ENCODE measurements at regions of chr9 and their contacts with region 1.

Region 1: DNA sequence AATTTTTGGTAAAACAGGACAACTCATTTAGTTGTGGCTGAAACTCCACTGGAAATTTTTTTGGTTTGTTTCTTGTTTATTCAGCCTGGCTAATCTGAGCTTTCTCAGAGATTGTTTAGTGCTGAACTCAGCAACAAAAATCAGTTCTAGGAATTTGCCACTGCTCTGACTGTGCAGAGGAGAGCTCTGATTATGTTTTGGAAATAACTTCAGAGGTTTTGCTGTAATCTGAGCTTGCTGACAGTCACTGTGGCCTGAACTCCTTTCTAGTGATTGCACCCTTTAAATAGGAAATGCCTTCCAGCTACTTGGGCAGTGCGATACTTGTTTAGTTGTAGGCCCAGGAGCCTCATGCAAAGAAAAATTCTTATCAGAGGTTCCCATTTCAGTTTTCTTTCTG is 60.2 kb downstream of the OSTF1 start:
- DNase-seq: no peak
- H3K4me3 Mint-ChIP-seq: peak overlapping the region; percentile 30
- H3K27ac Mint-ChIP-seq: peak overlapping the region; percentile 87
- H3K4me1 Mint-ChIP-seq: peaks cover 75% of the 10 kb centered on the region
- H3K27me3 Mint-ChIP-seq: no peaks in the 10 kb centered on the region

Region 2: DNA sequence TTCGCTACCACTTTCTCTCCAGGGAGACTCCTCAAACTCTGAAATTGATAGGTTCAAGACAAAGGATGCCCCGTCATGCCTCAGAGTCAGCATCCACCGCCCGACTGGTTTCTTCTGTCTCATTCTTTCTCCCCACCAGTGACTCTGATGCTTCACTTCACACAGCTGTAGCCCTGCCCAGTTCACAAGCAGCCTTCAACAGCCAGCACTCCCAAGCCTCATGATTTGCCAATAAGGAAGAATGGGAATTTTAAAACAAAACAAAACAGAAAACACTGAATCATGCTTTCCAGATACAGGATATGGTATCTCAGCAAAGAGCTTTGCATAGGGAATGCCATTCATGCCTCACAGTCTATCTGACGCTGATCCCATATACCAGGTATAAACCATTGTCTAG is 1022.6 kb before region 1 on chr9:
- intact Hi-C with region 1: loop called (anchors 5 kb)
- DNase-seq: no peak
- H3K4me3 Mint-ChIP-seq: no peak overlapping the region
- H3K27ac Mint-ChIP-seq: no peak overlapping the region
- H3K4me1 Mint-ChIP-seq: peaks cover 15% of the 10 kb centered on the region
- H3K27me3 Mint-ChIP-seq: no peaks in the 10 kb centered on the region

Region 3: DNA sequence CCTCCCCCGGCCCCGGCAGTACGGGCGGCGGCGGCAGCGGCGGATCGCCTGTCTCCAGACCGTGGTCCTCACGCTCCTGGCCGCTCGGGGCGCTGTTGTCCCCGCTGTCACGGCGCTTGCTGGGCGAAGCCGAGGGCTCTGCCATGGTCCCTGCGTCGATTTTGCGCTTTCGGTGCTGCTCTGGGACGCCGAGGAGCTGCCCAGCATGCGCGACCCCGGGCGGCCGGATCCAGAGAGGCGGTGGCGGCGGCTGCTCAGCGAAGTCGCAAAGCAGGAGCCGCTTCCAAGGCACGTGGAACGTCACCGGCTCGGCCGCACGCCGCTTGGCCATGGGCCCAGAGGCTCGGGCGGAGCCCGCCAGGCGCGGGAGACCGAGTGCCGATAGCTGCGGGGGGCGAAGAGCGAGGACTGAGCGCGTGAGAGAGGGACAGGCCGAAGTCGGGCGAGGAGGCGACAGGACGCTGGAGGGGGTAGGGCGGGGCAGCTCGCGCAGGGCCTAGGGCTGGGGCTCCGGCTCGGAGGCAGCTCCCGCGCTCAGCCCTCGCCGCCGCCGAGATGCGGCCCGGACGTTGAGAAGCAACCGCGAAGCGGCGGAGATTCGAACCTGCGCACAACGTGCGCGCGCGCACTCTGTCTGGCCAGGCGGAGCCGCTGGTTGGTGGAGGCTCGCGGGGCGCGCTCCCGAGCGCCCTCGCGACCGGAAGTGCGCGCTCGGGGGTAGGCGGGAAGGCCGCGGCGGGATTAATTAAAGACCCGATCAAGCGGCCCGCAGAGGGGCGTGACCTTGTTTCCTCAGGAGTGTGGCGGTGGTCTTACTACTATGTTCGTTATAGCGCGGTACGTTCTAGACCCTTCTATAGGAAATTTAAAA is 196.0 kb before region 1 on chr9 and contains the start of gene C9orf40:
- intact Hi-C with region 1: loop called (anchors 5 kb)
- DNase-seq: peak; percentile 88
- H3K4me3 Mint-ChIP-seq: peak within 1 kb of the TSS; percentile 93
- H3K27ac Mint-ChIP-seq: peak within 1 kb of the TSS; percentile 89
- H3K4me1 Mint-ChIP-seq: peaks cover 24% of the 10 kb centered on the region
- H3K27me3 Mint-ChIP-seq: no peaks in the 10 kb centered on the region
- total RNA-seq, gene C9orf40: 19.2 and 19.6 TPM in 2 replicates

Region 4: GRCh38 chr9:75071530-75072124 is 76.9 kb before region 1 on chr9:
- intact Hi-C with region 1: no loop called
- DNase-seq: peak; percentile 14
- H3K4me3 Mint-ChIP-seq: no peak overlapping the region
- H3K27ac Mint-ChIP-seq: peak overlapping the region; percentile 55
- H3K4me1 Mint-ChIP-seq: peaks cover 24% of the 10 kb centered on the region
- H3K27me3 Mint-ChIP-seq: no peaks in the 10 kb centered on the region

Region 5: DNA sequence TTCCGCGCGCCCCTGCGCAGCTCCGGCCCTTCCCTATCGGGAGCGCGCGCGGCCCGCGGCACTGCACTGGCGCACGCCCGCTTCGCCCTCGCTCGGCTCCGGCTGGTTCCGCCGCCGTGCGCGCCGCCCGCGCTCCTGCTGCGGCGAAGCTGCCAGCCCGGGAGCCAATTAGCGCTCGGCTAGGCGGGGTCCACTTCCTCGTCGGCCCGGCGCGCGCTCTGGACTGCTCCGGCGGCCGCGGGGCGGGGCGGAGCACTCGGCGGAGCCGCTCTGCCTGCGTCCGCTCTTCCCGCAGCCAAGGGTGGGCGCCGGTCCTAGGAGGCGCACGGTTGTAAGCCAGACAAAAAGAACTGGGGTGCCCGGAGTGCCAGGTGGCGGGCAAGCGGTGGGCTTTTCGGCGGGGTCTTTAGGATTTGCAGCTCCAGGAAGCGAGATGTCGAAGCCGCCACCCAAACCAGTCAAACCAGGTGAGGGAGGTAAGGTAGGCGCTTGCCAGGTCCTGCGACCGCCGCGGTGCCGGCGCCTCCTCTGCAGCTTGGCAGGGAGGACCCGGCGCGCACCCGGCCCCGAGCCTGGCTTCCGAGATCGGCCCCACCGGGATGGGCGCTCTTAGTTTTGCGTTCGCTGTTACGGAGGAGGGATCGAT is 60.2 kb before region 1 on chr9 and contains the start of gene OSTF1:
- intact Hi-C with region 1: loop called (anchors 1 kb)
- DNase-seq: peak; percentile 93
- H3K4me3 Mint-ChIP-seq: peak within 1 kb of the TSS; percentile 97
- H3K27ac Mint-ChIP-seq: peak within 1 kb of the TSS; percentile 94
- H3K4me1 Mint-ChIP-seq: peaks cover 62% of the 10 kb centered on the region
- H3K27me3 Mint-ChIP-seq: no peaks in the 10 kb centered on the region
- total RNA-seq, gene OSTF1: 86.8 and 87.5 TPM in 2 replicates

Region 6: GRCh38 chr9:75130621-75131230 is 17.8 kb before region 1 on chr9:
- intact Hi-C with region 1: loop called (anchors 1 kb)
- DNase-seq: no peak
- H3K4me3 Mint-ChIP-seq: no peak overlapping the region
- H3K27ac Mint-ChIP-seq: peak overlapping the region; percentile 33
- H3K4me1 Mint-ChIP-seq: peaks cover 56% of the 10 kb centered on the region
- H3K27me3 Mint-ChIP-seq: no peaks in the 10 kb centered on the region

Region 7: DNA sequence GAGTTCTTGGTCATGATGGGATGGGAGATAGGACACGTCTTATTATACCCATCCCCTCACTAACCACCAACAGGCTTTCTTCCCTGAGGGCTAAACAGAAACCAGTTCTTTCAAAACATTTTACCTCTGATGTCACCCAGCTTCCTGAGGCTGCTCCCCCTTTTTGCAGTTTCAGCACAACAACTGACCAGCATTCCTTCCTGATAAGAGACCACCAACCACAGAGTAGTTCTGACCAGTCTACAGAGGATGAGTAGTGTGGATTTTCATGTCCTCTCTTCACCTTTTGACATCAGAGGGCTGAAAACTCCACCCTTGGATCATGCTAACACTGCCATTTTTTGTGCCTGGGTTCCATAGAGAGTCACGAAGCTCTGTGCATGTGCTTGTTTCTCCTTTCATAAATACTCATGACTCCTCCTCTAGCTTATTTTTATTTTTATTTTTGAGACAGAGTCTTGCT is 22.4 kb after region 1 on chr9:
- intact Hi-C with region 1: loop called (anchors 2 kb)
- DNase-seq: no peak
- H3K4me3 Mint-ChIP-seq: no peak overlapping the region
- H3K27ac Mint-ChIP-seq: no peak overlapping the region
- H3K4me1 Mint-ChIP-seq: peaks cover 33% of the 10 kb centered on the region
- H3K27me3 Mint-ChIP-seq: no peaks in the 10 kb centered on the region

Region 8: GRCh38 chr9:76419782-76420380 is 1271.3 kb after region 1 on chr9:
- intact Hi-C with region 1: loop called (anchors 10 kb)
- DNase-seq: no peak
- H3K4me3 Mint-ChIP-seq: no peak overlapping the region
- H3K27ac Mint-ChIP-seq: no peak overlapping the region
- H3K4me1 Mint-ChIP-seq: peaks cover 40% of the 10 kb centered on the region
- H3K27me3 Mint-ChIP-seq: no peaks in the 10 kb centered on the region